ENCODE measurements at regions of chr6 and their contacts with region 1.

Region 1: GRCh38 chr6:83884523-83884922 is 25.0 kb downstream of the CYB5R4 start:
- DNase-seq: peak; percentile 59
- H3K4me3 ChIP-seq: no peak overlapping the region
- H3K27ac ChIP-seq: no peak overlapping the region
- H3K4me1 ChIP-seq: peaks cover 5% of the 10 kb centered on the region
- CTCF ChIP-seq: peak; percentile 88

Region 2: DNA sequence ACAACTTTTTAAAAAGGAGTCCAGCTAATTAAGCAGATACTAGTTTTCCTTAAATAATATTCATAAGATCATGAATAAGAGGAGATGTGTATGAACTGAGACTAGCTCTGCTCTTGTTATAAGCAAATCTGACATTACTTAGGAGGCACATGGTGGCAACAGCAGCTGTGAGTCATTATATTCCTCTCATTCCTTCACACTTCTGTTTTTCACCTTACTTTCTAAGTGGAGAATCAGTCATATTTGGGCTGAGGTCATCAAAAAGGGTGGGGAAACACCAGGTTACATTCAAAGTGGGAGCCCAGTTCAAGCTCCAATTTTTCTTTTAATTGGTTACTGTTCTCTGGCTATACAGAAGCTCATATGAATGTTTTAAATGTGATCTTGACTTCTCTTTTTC is 37.3 kb before region 1 on chr6:
- CTCF ChIA-PET with region 1: no interaction called
- POLR2A ChIA-PET with region 1: no interaction called
- intact Hi-C with region 1: no loop called
- DNase-seq: no peak
- H3K4me3 ChIP-seq: no peak overlapping the region
- H3K27ac ChIP-seq: no peak overlapping the region
- H3K4me1 ChIP-seq: no peaks in the 10 kb centered on the region
- CTCF ChIP-seq: no peak

Region 3: DNA sequence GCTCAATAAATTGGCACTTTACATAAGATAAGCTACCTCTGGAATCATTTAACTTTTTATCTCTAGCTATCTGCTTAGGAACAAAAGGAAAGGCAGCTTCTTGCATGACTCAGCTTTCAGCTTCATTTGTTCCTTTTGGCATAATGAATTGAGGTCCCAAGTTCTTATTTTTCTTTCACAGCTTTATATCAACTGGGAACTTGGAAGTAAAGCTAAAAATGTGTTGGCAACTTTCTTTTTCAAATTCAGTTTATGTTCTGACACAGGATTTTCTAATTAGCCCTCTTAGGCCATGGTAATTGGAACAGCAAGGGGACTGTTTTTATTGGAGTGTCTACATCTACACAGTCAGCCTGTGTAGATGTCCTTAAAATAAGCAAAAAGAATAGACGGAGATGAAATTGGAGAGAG is 93.8 kb after region 1 on chr6:
- CTCF ChIA-PET with region 1: no interaction called
- POLR2A ChIA-PET with region 1: no interaction called
- intact Hi-C with region 1: no loop called
- DNase-seq: no peak
- H3K4me3 ChIP-seq: no peak overlapping the region
- H3K27ac ChIP-seq: no peak overlapping the region
- H3K4me1 ChIP-seq: no peaks in the 10 kb centered on the region
- CTCF ChIP-seq: no peak

Region 4: GRCh38 chr6:84220809-84221409 is 336.4 kb after region 1 on chr6:
- CTCF ChIA-PET with region 1: no interaction called
- POLR2A ChIA-PET with region 1: interaction called, 3 read pairs
- intact Hi-C with region 1: loop called (anchors 2 kb)
- DNase-seq: peak; percentile 38
- H3K4me3 ChIP-seq: no peak overlapping the region
- H3K27ac ChIP-seq: no peak overlapping the region
- H3K4me1 ChIP-seq: no peaks in the 10 kb centered on the region
- CTCF ChIP-seq: peak; percentile 83

Region 5: DNA sequence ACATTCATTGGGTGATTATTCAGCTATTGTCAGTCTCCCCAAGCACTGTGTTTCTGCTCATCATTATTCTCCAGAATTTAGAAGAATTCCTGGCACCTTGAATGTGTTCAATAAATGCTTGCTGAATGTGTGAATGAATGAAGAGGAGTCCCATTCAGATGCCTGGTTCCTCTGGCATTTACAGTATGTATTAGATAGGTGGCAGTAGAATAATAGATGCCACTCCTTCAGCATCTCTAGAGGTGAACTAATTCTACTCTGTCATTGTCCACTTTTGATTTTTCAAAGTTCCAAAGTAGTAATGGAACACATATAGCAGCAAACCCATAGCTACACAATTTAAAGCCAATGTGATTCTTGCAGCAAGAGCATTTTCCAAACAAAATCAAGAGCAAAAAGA is 461.8 kb after region 1 on chr6:
- CTCF ChIA-PET with region 1: no interaction called
- POLR2A ChIA-PET with region 1: no interaction called
- intact Hi-C with region 1: no loop called
- DNase-seq: no peak
- H3K4me3 ChIP-seq: no peak overlapping the region
- H3K27ac ChIP-seq: no peak overlapping the region
- H3K4me1 ChIP-seq: no peaks in the 10 kb centered on the region
- CTCF ChIP-seq: peak; percentile 43

Measured in OCI-LY7 (cell line).